HEK293 (cell line): ENCODE measurements at regions of chr17 and their contacts with region 1.

Region 1: DNA sequence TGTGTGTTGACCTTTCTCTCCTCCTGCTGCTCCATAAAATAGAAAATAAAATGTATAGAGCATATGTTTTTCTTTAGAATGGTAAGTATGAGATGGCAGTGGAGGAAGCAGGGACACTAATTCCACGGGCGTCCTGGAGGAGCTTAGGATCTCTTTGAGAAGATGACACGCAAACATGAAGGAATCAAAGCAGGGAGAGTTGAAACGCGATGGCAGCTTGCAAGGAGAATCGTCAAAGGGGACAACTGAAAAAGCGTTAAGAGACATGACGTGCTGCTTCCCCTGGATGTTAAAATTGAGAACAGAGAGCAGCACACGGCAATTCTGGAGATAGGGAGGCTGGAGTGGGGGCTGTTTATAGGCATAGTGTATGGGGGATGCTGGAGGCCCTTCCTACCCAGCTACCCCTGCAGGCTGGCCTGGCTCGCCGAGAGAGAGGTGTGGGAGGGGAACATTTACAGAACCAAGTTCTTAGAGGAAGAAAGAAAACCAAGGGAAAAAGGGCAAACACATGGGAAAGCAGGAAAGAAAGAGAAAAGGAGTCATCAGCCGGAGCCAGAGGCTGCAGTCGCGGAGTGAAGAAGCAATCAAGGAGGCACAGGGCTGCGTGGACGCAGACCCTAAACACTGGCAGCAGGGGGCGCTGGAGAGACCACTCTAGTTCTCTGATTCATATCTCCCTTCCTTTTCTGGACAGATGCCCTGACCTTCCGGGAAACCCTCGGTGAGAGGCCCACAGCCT is 55.8 kb downstream of the MYH13 start:
- H3K4me3 ChIP-seq: no peak overlapping the region
- H3K27ac ChIP-seq: no peak overlapping the region
- H3K4me1 ChIP-seq: no peaks in the 10 kb centered on the region
- CTCF ChIP-seq: no peak

Region 2: DNA sequence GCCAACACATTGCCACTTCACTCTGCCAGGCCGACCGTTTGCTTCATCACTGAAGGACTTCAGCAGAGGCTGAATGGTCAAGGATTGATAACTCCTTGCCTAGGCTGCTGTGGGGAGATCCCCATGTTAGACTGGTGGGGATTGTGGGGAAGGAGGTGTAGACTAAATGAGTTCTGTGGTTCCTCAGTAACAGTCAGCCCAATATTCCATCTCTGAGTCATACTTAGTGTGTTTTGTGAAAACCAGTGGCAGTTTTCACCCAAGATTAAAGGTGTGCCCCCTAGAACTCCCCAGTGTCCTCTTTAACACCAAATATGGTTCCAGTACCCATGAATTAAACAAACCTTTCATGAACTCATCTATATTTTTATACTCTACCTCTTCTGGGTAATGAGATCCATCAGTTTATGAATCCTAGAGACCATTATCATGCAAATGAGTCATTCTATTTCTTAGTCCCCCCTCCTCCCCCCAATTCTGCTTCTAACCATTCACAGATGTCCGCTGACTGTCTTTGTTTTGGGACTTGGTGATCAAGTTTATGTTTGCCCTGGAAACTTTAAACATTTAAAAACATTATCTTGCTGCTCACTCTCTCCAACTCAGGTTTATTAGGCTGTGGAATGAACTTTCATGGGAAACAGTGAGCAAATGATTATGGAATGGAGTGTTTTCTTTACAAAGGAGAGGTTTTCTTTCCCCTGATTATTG is 51.7 kb before region 1 on chr17:
- CTCF ChIA-PET with region 1: no interaction called
- POLR2A ChIA-PET with region 1: no interaction called
- H3K4me3 ChIP-seq: no peak overlapping the region
- H3K27ac ChIP-seq: no peak overlapping the region
- H3K4me1 ChIP-seq: 0 out of 2 replicates have a peak, but pooled peaks cover 5% of the 10 kb centered on the region
- CTCF ChIP-seq: no peak

Region 3: DNA sequence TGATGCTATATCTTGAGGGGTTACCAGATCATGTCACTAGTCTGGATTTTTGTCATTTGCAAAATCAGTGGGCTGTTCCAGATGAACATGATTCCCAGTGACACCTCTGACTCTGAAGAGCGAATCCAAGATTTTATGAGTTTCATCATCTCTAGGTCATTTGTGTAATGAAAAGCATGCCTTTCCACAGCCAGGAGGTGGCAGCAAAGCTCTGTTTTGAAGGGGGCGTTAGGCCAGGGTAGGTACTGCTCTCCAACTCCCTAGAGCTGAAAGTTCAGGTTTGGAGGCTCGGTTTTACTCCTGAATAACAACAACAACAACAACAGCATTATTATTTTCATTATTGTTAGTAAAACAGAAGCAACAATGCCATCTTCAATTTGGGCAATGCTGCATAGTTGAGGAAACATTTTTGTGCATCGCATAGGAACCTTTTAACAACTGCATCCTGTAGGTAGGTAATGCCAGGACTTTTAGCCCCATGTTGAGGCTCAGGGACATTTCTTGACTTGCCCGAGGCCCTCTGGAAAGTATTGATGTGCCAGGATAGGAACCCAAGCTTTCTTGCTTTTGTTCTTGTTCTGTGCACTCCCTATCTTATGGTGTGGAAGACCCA is 21.1 kb before region 1 on chr17:
- CTCF ChIA-PET with region 1: interaction called, 15 read pairs
- POLR2A ChIA-PET with region 1: no interaction called
- H3K4me3 ChIP-seq: no peak overlapping the region
- H3K27ac ChIP-seq: no peak overlapping the region
- H3K4me1 ChIP-seq: no peaks in the 10 kb centered on the region
- CTCF ChIP-seq: peak; percentile 64; the same call in 1 of the 2 replicates

Region 4: DNA sequence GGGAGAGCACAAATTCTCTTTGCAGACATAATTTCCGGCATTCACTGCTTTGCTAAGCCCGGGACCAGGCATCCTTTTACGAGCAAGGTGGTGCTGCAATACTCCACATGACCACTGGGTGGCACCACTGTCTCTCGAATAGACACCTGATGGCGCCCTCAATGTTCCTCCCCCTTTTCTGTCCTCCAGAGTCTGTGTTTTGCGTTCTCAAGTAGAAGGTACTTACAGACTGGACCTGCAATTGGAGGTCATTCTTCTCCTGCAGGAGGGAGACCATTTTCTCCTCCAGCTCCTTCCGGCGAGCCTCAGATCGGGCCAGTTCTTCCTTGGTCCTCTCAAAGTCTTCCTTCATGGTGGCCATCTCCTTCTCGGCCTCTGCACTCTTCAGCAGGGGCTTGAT is 10.7 kb after region 1 on chr17:
- CTCF ChIA-PET with region 1: interaction called, 37 read pairs
- POLR2A ChIA-PET with region 1: no interaction called
- H3K4me3 ChIP-seq: no peak overlapping the region
- H3K27ac ChIP-seq: no peak overlapping the region
- H3K4me1 ChIP-seq: no peaks in the 10 kb centered on the region
- CTCF ChIP-seq: peak; percentile 78

Region 5: DNA sequence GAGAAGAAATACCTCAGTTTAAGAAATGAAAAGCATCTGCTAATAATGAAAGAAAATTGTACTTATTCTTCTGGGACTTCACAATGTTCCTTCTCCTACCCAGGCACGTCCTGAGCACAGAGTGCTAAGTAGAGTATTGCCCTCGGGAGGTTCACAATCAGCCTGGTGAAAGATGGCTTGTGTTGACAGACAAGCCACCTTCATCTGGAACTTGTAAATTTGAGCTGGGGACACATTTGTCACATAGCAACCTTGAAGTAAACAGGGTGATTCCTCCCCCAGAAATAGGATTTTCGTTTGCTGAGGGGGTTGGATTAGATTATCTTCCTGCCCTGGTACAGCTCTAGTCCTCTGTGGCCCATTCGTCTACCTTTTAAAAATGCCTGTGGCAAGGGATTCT is 266.9 kb after region 1 on chr17:
- CTCF ChIA-PET with region 1: interaction called, 12 read pairs
- POLR2A ChIA-PET with region 1: no interaction called
- H3K4me3 ChIP-seq: no peak overlapping the region
- H3K27ac ChIP-seq: no peak overlapping the region
- H3K4me1 ChIP-seq: no peaks in the 10 kb centered on the region
- CTCF ChIP-seq: no peak